Activated CD4-positive, alpha-beta memory T cell treated with anti-CD3 and anti-CD28 coated beads for 36 hours (primary cell): ENCODE measurements at regions of chr21 and their contacts with region 1.

Region 1: DNA sequence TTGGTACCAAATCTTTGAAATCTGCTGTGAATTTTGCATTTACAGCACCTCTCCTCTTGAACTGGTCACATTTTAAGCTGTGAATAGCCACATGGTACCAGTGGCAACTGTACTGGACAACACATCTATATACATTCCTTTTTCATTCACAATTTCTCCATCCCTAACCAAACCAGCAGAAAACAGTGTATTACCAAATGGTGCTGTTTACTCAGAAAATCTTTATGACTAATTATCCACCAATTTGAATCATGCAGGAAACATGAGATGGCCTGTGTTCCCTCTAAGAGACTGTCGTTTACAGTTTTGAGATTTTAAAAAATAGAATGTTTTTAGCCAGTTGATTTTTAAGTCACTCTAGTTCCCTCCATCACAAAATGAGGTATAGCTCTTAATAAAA is 17.6 kb upstream of the CCT8 start:
- DNase-seq: no peak
- H3K4me3 Mint-ChIP-seq: no peak overlapping the region
- H3K27ac Mint-ChIP-seq: peak overlapping the region; percentile 38
- H3K4me1 Mint-ChIP-seq: peaks cover 15% of the 10 kb centered on the region
- H3K27me3 Mint-ChIP-seq: no peaks in the 10 kb centered on the region

Region 2: DNA sequence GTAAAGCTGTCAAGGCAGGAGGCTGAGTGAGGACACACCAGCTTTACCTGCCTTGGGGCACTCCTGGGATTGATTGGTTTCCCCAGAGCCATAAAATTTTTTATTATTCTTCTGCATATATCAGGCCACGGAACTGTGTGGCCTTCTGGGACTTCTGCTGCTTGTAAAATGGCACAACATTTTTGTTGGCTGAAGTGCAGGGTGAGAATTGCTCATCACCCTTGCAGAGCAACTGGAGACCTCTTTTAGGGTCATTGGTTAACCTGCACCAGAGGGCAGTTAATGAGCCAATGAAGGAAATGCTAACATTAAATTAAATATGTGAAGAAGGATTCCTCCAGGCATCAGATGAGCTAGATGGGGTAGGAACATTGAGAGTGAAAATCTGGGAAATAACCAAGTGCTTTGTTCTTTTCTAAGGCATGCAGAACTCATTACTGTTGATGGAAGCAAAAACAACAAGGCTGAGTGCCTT is 186.0 kb before region 1 on chr21:
- CTCF ChIA-PET with region 1: no interaction called
- POLR2A ChIA-PET with region 1: no interaction called
- intact Hi-C with region 1: no loop called
- DNase-seq: no peak
- H3K4me3 Mint-ChIP-seq: no peak overlapping the region
- H3K27ac Mint-ChIP-seq: no peak overlapping the region
- H3K4me1 Mint-ChIP-seq: no peaks in the 10 kb centered on the region
- H3K27me3 Mint-ChIP-seq: peaks cover 2% of the 10 kb centered on the region

Region 3: GRCh38 chr21:29078869-29079767 is 11.9 kb before region 1 on chr21:
- CTCF ChIA-PET with region 1: interaction called, 6 read pairs
- POLR2A ChIA-PET with region 1: interaction called, 3 read pairs
- intact Hi-C with region 1: loop called (anchors 2 kb)
- DNase-seq: peak; percentile 66
- H3K4me3 Mint-ChIP-seq: peak overlapping the region; percentile 84
- H3K27ac Mint-ChIP-seq: peak overlapping the region; percentile 81
- H3K4me1 Mint-ChIP-seq: peaks cover 58% of the 10 kb centered on the region
- H3K27me3 Mint-ChIP-seq: no peaks in the 10 kb centered on the region

Region 4: DNA sequence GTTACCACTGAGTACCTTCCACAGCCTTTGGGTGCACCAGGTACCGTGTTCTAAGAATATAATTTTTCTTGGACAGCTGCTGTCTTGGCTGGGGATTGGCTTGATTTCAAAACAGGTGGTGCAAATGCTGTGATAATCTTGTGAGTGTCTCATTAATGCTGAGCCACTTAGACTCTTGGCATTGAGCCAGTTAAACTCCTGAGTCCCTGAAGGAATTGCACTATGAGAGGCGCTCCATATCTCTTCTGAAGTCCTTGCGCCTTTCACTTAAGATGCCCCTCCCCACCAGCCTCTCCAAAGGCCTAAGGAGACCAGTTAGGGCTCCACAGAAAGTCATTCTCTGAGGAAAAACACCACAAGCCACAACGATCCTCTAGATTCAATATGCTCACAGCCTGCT is 258.7 kb after region 1 on chr21:
- CTCF ChIA-PET with region 1: interaction called, 9 read pairs
- POLR2A ChIA-PET with region 1: interaction called, 4 read pairs
- intact Hi-C with region 1: loop called (anchors 2 kb)
- DNase-seq: no peak
- H3K4me3 Mint-ChIP-seq: no peak overlapping the region
- H3K27ac Mint-ChIP-seq: no peak overlapping the region
- H3K4me1 Mint-ChIP-seq: peaks cover 17% of the 10 kb centered on the region
- H3K27me3 Mint-ChIP-seq: no peaks in the 10 kb centered on the region

Region 5: DNA sequence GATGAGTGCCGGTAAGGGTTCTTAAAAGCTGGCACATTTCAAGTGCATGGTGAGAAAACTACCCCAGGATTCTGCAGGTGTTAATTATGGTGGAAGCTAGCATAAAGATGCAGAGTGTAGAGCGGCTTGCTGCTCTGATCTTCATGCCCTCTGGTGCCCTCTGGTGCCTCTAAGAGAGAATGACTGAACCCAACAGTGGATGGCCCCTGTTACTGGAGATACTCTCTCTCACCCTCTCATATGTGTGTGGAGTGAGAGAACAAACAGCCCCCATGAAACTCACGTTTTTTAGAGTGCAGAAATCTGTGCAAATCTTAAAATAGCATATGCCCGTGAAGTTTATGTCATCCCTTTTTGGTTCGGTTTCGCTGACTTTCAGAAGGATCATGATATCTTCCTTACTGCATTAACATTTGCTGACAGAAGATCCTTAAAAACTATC is 758.7 kb after region 1 on chr21:
- CTCF ChIA-PET with region 1: interaction called, 4 read pairs
- POLR2A ChIA-PET with region 1: no interaction called
- intact Hi-C with region 1: loop called (anchors 2 kb)
- DNase-seq: peak; percentile 49
- H3K4me3 Mint-ChIP-seq: no peak overlapping the region
- H3K27ac Mint-ChIP-seq: no peak overlapping the region
- H3K4me1 Mint-ChIP-seq: no peaks in the 10 kb centered on the region
- H3K27me3 Mint-ChIP-seq: peaks cover 3% of the 10 kb centered on the region